Heart left ventricle (tissue), 16 donors: ENCODE measurements at regions of chr1 and their contacts with region 1.

Region 1: GRCh38 chr1:6602669-6603237 is at the start of gene KLHL21:
- DNase-seq: peak; percentile 92 to 96 (median 94)
- ATAC-seq: peak; percentile 46 to 85 (median 74)
- H3K4me3 ChIP-seq: peak within 1 kb of the TSS; percentile 72 to 96 (median 86)
- H3K27ac ChIP-seq: peak within 1 kb of the TSS; percentile 92 to 100 (median 99)
- H3K4me1 ChIP-seq: peaks cover 18 to 61% (median 52%) of the 10 kb centered on the region in 12 donors
- H3K27me3 ChIP-seq: no peaks in the 10 kb centered on the region
- CTCF ChIP-seq: no peak
- POLR2A ChIP-seq: peak; percentile 70 to 97
- total RNA-seq, gene KLHL21: 38.7 to 179 (median 65.4) TPM

Region 2: DNA sequence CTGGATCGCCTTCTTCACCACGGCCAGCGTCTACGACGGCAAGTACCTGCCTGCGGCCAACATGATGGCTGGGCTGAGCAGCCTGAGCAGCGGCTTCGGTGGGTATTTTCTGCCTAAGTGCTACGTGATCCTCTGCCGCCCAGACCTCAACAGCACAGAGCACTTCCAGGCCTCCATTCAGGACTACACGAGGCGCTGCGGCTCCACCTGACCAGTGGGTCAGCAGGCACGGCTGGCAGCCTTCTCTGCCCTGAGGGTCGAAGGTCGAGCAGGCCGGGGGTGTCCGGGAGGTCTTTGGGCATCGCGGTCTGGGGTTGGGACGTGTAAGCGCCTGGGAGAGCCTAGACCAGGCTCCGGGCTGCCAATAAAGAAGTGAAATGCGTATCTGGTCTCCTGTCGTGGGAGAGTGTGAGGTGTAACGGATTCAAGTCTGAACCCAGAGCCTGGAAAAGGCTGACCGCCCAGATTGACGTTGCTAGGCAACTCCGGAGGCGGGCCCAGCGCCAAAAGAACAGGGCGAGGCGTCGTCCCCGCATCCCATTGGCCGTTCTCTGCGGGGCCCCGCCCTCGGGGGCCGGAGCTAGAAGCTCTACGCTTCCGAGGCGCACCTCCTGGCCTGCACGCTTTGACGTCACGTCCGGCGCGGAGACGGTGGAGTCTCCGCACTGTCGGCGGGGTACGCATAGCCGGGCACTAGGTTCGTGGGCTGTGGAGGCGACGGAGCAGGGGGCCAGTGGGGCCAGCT is 23.2 kb before region 1 on chr1 and contains the start of gene ZBTB48:
- intact Hi-C with region 1: loop called in 1 of 10 experiments (anchors 2 kb)
- DNase-seq: peak; percentile 99 to 100 (median 100)
- ATAC-seq: peak; percentile 95 to 98 (median 98)
- H3K4me3 ChIP-seq: peak within 1 kb of the TSS; percentile 65 to 97 (median 83)
- H3K27ac ChIP-seq: peak within 1 kb of the TSS; percentile 79 to 97 (median 91)
- H3K4me1 ChIP-seq: peaks cover 6 to 52% (median 35%) of the 10 kb centered on the region in 12 donors
- H3K27me3 ChIP-seq: no peaks in the 10 kb centered on the region
- CTCF ChIP-seq: no peak
- POLR2A ChIP-seq: peak; percentile 92 to 95
- total RNA-seq, gene ZBTB48: 6.4 to 23.1 (median 11.8) TPM

Region 3: DNA sequence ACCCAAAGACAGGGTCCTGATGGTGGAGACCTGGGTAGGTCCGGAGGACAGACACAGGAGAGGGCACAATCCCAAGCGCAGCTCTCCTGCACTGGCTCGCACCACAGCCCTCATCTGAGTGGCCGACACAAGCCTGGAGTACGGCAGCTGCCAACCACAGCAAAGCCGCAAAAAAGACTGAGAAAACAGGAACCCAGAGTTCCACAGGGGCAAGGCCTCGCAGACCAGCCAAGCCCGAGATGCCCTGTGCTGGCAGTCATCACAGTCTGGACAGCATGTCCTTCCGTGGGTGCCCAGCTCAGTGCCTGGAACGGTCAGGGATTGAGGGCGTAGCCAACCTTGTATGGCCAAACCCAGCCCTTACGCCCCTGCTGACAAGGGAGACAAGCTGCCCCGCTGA is 11.5 kb before region 1 on chr1:
- intact Hi-C with region 1: no loop called
- DNase-seq: no peak
- ATAC-seq: peak; percentile 8 to 38 (median 25)
- H3K4me3 ChIP-seq: no peak overlapping the region
- H3K27ac ChIP-seq: peak overlapping the region in 7 of 12 donors; percentile 2 to 68 (median 20)
- H3K4me1 ChIP-seq: peaks cover 0 to 94% (median 50%) of the 10 kb centered on the region in 12 donors
- H3K27me3 ChIP-seq: no peaks in the 10 kb centered on the region
- CTCF ChIP-seq: no peak
- POLR2A ChIP-seq: no peak

Region 4: DNA sequence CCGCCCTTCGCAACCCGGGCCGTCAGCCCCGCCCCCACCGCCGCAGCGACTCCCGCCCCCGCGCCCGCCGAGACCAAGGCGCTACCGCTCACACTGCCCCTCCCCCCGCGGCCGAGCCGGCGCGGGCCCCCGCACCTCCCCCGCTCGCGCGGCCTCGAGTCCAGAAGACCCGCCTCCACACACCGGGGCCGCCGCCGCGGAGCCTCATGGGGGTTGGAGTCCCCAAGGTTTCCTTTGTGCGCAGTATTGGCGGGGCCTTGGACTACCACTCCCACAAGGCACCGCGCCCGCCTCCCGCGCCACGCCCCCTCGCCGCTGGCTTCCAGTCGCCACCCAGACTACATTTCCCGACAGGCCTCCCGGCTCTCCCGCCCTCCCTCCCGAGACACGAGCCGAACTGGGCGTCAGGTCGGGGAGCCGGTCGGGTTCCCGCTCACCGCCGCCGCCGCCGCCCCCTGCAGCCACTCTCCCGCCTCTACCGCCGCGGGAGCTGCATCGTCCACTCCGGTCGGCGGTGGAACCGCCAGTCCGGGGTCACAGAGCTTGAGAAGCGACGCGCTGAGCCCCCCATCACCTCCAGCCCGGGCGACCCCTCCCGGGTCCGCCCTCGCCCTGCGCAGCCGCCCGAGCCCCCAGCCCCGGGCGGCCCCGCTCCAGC is 10.7 kb after region 1 on chr1 and contains the start of gene PHF13:
- intact Hi-C with region 1: loop called in 2 of 10 experiments (anchors 1 kb)
- DNase-seq: peak; percentile 99 to 100 (median 100)
- ATAC-seq: peak; percentile 96 to 100 (median 99)
- H3K4me3 ChIP-seq: peak within 1 kb of the TSS; percentile 68 to 100 (median 96)
- H3K27ac ChIP-seq: peak within 1 kb of the TSS; percentile 90 to 99 (median 98)
- H3K4me1 ChIP-seq: peaks cover 0 to 41% (median 20%) of the 10 kb centered on the region in 12 donors
- H3K27me3 ChIP-seq: no peaks in the 10 kb centered on the region
- CTCF ChIP-seq: peak in 1 of 12 donors; percentile 5
- POLR2A ChIP-seq: peak in 1 of 2 donors; percentile 49
- total RNA-seq, gene PHF13: 3.5 to 11.2 (median 7.9) TPM

Region 5: GRCh38 chr1:6624710-6625583 is 22.2 kb after region 1 on chr1 and contains the start of gene THAP3:
- intact Hi-C with region 1: loop called in 2 of 10 experiments (anchors 2 kb)
- DNase-seq: peak; percentile 90 to 95 (median 92)
- ATAC-seq: peak; percentile 70 to 95 (median 95)
- H3K4me3 ChIP-seq: peak within 1 kb of the TSS; percentile 60 to 98 (median 82)
- H3K27ac ChIP-seq: peak within 1 kb of the TSS; percentile 69 to 90 (median 84)
- H3K4me1 ChIP-seq: peaks cover 3 to 28% (median 18%) of the 10 kb centered on the region in 12 donors
- H3K27me3 ChIP-seq: no peaks in the 10 kb centered on the region
- CTCF ChIP-seq: peak in 4 of 12 donors; percentile 13 to 37 (median 16)
- POLR2A ChIP-seq: peak in 1 of 2 donors; percentile 40
- total RNA-seq, gene THAP3: 7.5 to 20.7 (median 12.1) TPM

Region 6: GRCh38 chr1:6701437-6702153 is 98.8 kb after region 1 on chr1 and contains the start of gene DNAJC11:
- intact Hi-C with region 1: loop called in 1 of 10 experiments (anchors 5 kb)
- DNase-seq: peak; percentile 90 to 95 (median 92)
- ATAC-seq: peak; percentile 89 to 98 (median 95)
- H3K4me3 ChIP-seq: peak within 1 kb of the TSS; percentile 68 to 100 (median 94)
- H3K27ac ChIP-seq: peak within 1 kb of the TSS; percentile 70 to 92 (median 87)
- H3K4me1 ChIP-seq: peaks cover 5 to 29% (median 19%) of the 10 kb centered on the region in 12 donors
- H3K27me3 ChIP-seq: no peaks in the 10 kb centered on the region
- CTCF ChIP-seq: peak; percentile 60 to 100 (median 93)
- POLR2A ChIP-seq: peak in 1 of 2 donors; percentile 34
- total RNA-seq, gene DNAJC11: 42.4 to 67.4 (median 61.2) TPM

Region 7: DNA sequence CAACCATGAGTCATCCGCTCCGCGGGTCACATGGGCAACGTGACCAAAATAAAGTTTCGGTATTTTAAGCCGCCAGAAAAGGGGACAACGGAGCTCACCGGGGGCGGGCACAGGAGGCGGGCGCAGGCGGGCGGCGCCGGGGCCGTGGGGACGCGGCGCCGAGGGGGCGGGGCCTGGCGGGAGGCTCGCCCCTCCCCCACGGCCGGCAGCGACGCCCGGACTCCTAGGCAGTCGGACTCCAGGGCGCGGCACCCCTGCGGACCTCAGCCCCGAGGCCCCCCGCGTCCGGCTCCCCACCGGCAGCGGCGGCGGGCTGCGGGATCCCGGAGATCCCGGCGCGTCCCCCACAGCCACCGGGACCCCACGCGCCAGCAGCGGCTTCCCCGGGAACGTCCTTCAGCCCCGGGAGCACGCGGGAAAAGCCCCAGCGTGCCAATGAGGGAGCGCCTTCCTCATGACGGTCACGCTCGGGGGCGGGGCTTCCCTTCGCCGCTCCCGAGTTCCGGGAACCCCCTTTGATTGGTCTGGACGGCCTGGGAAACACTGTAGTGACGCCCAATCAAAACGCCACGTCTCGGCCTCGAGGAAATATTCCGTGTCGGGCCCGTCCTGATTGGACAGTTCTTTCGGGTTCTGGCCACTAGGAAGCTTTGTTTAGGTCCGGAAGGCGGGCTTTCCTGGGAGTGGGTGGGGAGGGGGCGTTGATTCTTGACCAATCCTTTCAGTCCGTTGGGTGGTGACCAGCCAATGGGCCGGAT is 182.0 kb after region 1 on chr1:
- intact Hi-C with region 1: no loop called
- DNase-seq: peak; percentile 99 to 100 (median 100)
- ATAC-seq: peak; percentile 91 to 97 (median 96)
- H3K4me3 ChIP-seq: peak overlapping the region; percentile 29 to 96 (median 76)
- H3K27ac ChIP-seq: peak overlapping the region; percentile 91 to 100 (median 99)
- H3K4me1 ChIP-seq: peaks cover 3 to 50% (median 34%) of the 10 kb centered on the region in 12 donors
- H3K27me3 ChIP-seq: no peaks in the 10 kb centered on the region
- CTCF ChIP-seq: no peak
- POLR2A ChIP-seq: peak; percentile 22 to 66